IMR-90 (cell line): ENCODE measurements at regions of chr5 and their contacts with region 1.

Region 1: GRCh38 chr5:125412561-125413495 is 666.4 kb upstream of the ZNF608 start:
- DNase-seq: peak; percentile 91
- ATAC-seq: peak; percentile 84
- H3K4me3 ChIP-seq: peak overlapping the region; percentile 10; the same call in 1 of the 2 replicates
- H3K27ac ChIP-seq: no peak overlapping the region
- H3K4me1 ChIP-seq: peaks cover 20% of the 10 kb centered on the region
- H3K27me3 ChIP-seq: no peaks in the 10 kb centered on the region
- CTCF ChIP-seq: peak; percentile 42
- POLR2A ChIP-seq: no peak
- RAD21 ChIP-seq: peak; percentile 55

Region 2: DNA sequence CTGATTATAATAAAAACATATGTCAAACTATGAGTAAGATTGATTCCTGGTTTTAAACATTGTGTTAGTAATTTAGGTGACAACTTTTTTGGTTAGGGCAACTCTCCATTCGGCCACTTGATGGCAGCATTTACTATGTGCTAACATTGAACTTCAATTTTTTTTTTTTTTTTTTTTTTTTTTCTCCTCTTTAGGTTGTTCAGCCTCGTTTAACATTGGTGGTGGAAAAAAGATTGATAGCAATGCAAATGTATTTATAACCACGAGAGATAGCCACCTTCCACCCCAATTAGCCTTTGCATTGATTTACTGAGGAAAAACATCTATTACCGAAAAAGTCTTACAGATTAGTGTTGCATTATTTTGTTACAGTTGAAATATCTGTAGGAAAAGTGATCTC is 1741.8 kb before region 1 on chr5:
- CTCF ChIA-PET with region 1: no interaction called
- POLR2A ChIA-PET with region 1: no interaction called
- dilution Hi-C with region 1: no loop called
- in situ Hi-C with region 1: no loop called
- intact Hi-C with region 1: loop called (anchors 10 kb)
- DNase-seq: peak; percentile 30
- ATAC-seq: no peak; the same call in 1 of the 2 replicates
- H3K4me3 ChIP-seq: no peak overlapping the region
- H3K27ac ChIP-seq: no peak overlapping the region
- H3K4me1 ChIP-seq: peaks cover 4% of the 10 kb centered on the region
- H3K27me3 ChIP-seq: no peaks in the 10 kb centered on the region
- CTCF ChIP-seq: peak; percentile 85
- POLR2A ChIP-seq: 0 out of 2 replicates have a peak, but pooled peaks have one; percentile 35
- RAD21 ChIP-seq: peak; percentile 93

Region 3: DNA sequence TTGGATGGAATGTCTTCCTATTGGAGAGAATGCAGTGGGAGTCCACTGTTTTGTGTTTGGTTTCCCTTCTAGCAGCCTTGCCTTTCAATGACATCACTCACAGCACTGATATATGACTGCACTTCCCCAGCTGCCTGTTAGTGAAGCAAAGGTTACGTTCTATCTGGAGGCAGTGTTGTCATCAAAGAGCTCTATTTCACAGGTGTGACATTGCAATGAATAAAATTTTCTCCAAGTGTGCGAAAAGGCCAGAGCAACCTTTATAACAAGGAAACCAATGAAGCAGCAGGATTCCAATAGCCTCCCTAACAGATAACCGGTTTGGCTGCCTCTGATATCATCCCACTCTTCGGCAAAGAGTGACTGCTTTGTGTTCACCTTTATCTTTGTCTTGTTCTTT is 142.9 kb before region 1 on chr5:
- CTCF ChIA-PET with region 1: no interaction called
- POLR2A ChIA-PET with region 1: no interaction called
- dilution Hi-C with region 1: no loop called
- in situ Hi-C with region 1: no loop called
- intact Hi-C with region 1: no loop called
- DNase-seq: no peak
- ATAC-seq: no peak
- H3K4me3 ChIP-seq: no peak overlapping the region
- H3K27ac ChIP-seq: no peak overlapping the region
- H3K4me1 ChIP-seq: peaks cover 2% of the 10 kb centered on the region; the same call in 1 of the 2 replicates
- H3K27me3 ChIP-seq: no peaks in the 10 kb centered on the region
- CTCF ChIP-seq: no peak
- POLR2A ChIP-seq: no peak
- RAD21 ChIP-seq: no peak

Region 4: GRCh38 chr5:125326150-125326510 is 86.7 kb before region 1 on chr5:
- CTCF ChIA-PET with region 1: interaction called, 4 read pairs
- POLR2A ChIA-PET with region 1: no interaction called
- dilution Hi-C with region 1: no loop called
- in situ Hi-C with region 1: no loop called
- intact Hi-C with region 1: loop called (anchors 1 kb)
- DNase-seq: peak; percentile 88
- ATAC-seq: peak; percentile 80
- H3K4me3 ChIP-seq: no peak overlapping the region
- H3K27ac ChIP-seq: no peak overlapping the region
- H3K4me1 ChIP-seq: peaks cover 2% of the 10 kb centered on the region
- H3K27me3 ChIP-seq: no peaks in the 10 kb centered on the region
- CTCF ChIP-seq: no peak
- POLR2A ChIP-seq: no peak
- RAD21 ChIP-seq: no peak

Region 5: GRCh38 chr5:125595095-125595494 is 182.3 kb after region 1 on chr5:
- CTCF ChIA-PET with region 1: no interaction called
- POLR2A ChIA-PET with region 1: no interaction called
- dilution Hi-C with region 1: no loop called
- in situ Hi-C with region 1: no loop called
- intact Hi-C with region 1: loop called (anchors 5 kb)
- DNase-seq: peak; percentile 82
- ATAC-seq: peak; percentile 40
- H3K4me3 ChIP-seq: no peak overlapping the region
- H3K27ac ChIP-seq: no peak overlapping the region
- H3K4me1 ChIP-seq: no peaks in the 10 kb centered on the region; the same call in 1 of the 2 replicates
- H3K27me3 ChIP-seq: no peaks in the 10 kb centered on the region
- CTCF ChIP-seq: no peak
- POLR2A ChIP-seq: no peak
- RAD21 ChIP-seq: no peak

Region 6: DNA sequence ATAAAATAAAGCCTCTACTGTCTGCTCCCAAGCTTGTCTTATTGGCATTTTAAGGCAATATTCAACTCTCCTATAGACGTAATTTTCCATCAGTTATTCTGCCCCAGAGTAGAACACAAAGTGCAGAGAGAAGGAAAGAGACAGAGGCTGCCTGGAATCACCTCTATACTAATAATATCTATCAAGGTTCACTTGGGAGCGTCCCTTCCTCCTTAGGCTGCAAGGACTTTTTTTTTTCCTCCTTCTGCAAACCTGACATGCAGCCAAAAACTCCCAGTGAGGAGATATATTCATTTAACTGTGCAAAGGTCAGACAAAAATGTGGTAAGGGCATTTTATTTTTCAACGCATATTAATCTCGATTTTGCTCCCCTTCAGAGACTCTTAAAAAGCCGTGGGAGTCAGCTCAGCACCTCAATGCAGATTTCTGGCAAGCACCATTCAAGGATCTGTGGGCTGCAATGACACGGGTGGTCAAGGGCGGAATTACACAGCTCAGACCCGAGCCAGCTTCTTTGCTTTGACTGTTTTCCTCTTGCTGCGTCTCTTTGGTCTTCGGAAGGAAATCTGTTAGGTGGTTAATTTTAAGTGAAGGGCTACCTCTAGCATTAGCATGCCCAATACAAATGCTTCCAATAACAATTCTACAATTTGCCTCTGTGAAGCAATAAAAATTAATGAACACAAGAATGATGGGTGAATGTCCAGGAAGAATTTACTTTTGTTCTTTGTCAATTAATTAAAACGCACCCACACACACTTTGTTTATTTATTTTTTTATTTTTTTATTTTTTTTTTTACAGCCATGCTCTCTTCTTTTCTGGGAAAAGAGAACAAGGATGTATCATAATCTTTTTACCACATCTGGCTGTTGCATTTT is 422.7 kb after region 1 on chr5:
- CTCF ChIA-PET with region 1: no interaction called
- POLR2A ChIA-PET with region 1: no interaction called
- dilution Hi-C with region 1: no loop called
- in situ Hi-C with region 1: no loop called
- intact Hi-C with region 1: loop called (anchors 5 kb)
- DNase-seq: peak; percentile 40
- ATAC-seq: peak; percentile 61; the same call in 1 of the 2 replicates
- H3K4me3 ChIP-seq: no peak overlapping the region
- H3K27ac ChIP-seq: no peak overlapping the region
- H3K4me1 ChIP-seq: no peaks in the 10 kb centered on the region
- H3K27me3 ChIP-seq: no peaks in the 10 kb centered on the region; the same call in 1 of the 2 replicates
- CTCF ChIP-seq: peak; percentile 46
- POLR2A ChIP-seq: no peak
- RAD21 ChIP-seq: peak; percentile 65

Region 7: GRCh38 chr5:125874717-125875116 is 461.9 kb after region 1 on chr5:
- CTCF ChIA-PET with region 1: no interaction called
- POLR2A ChIA-PET with region 1: no interaction called
- dilution Hi-C with region 1: no loop called
- in situ Hi-C with region 1: no loop called
- intact Hi-C with region 1: no loop called
- DNase-seq: no peak
- ATAC-seq: no peak
- H3K4me3 ChIP-seq: no peak overlapping the region
- H3K27ac ChIP-seq: no peak overlapping the region
- H3K4me1 ChIP-seq: no peaks in the 10 kb centered on the region
- H3K27me3 ChIP-seq: no peaks in the 10 kb centered on the region
- CTCF ChIP-seq: no peak
- POLR2A ChIP-seq: no peak
- RAD21 ChIP-seq: no peak